ENCODE measurements at regions of chrX and their contacts with region 1.

Region 1: GRCh38 chrX:23732704-23733103 is 10.4 kb downstream of the ACOT9 start:
- DNase-seq: peak; percentile 8
- H3K4me3 Mint-ChIP-seq: peak overlapping the region; percentile 55
- H3K27ac Mint-ChIP-seq: peak overlapping the region; percentile 88
- H3K4me1 Mint-ChIP-seq: peaks cover 41% of the 10 kb centered on the region
- H3K27me3 Mint-ChIP-seq: no peaks in the 10 kb centered on the region

Region 2: GRCh38 chrX:23035493-23035892 is 697.2 kb before region 1 on chrX:
- CTCF ChIA-PET with region 1: no interaction called
- intact Hi-C with region 1: no loop called
- DNase-seq: no peak
- H3K4me3 Mint-ChIP-seq: no peak overlapping the region
- H3K27ac Mint-ChIP-seq: no peak overlapping the region
- H3K4me1 Mint-ChIP-seq: no peaks in the 10 kb centered on the region
- H3K27me3 Mint-ChIP-seq: no peaks in the 10 kb centered on the region

Region 3: GRCh38 chrX:23704673-23705206 is 28.0 kb before region 1 on chrX:
- CTCF ChIA-PET with region 1: interaction called, 3 read pairs
- intact Hi-C with region 1: loop called (anchors 1 kb)
- DNase-seq: no peak
- H3K4me3 Mint-ChIP-seq: no peak overlapping the region
- H3K27ac Mint-ChIP-seq: peak overlapping the region; percentile 56
- H3K4me1 Mint-ChIP-seq: peaks cover 5% of the 10 kb centered on the region
- H3K27me3 Mint-ChIP-seq: no peaks in the 10 kb centered on the region

Region 4: GRCh38 chrX:23756157-23756559 is 23.5 kb after region 1 on chrX:
- CTCF ChIA-PET with region 1: no interaction called
- intact Hi-C with region 1: loop called (anchors 1 kb)
- DNase-seq: peak; percentile 75
- H3K4me3 Mint-ChIP-seq: peak overlapping the region; percentile 24
- H3K27ac Mint-ChIP-seq: peak overlapping the region; percentile 66
- H3K4me1 Mint-ChIP-seq: peaks cover 8% of the 10 kb centered on the region
- H3K27me3 Mint-ChIP-seq: no peaks in the 10 kb centered on the region

Region 5: GRCh38 chrX:23861215-23861896 is 128.7 kb after region 1 on chrX:
- CTCF ChIA-PET with region 1: no interaction called
- intact Hi-C with region 1: no loop called
- DNase-seq: no peak
- H3K4me3 Mint-ChIP-seq: no peak overlapping the region
- H3K27ac Mint-ChIP-seq: no peak overlapping the region
- H3K4me1 Mint-ChIP-seq: peaks cover 5% of the 10 kb centered on the region
- H3K27me3 Mint-ChIP-seq: no peaks in the 10 kb centered on the region

Region 6: GRCh38 chrX:23901805-23902204 is 169.1 kb after region 1 on chrX:
- CTCF ChIA-PET with region 1: interaction called, 10 read pairs
- intact Hi-C with region 1: loop called (anchors 2 kb)
- DNase-seq: peak; percentile 61
- H3K4me3 Mint-ChIP-seq: no peak overlapping the region
- H3K27ac Mint-ChIP-seq: no peak overlapping the region
- H3K4me1 Mint-ChIP-seq: peaks cover 11% of the 10 kb centered on the region
- H3K27me3 Mint-ChIP-seq: no peaks in the 10 kb centered on the region

Region 7: DNA sequence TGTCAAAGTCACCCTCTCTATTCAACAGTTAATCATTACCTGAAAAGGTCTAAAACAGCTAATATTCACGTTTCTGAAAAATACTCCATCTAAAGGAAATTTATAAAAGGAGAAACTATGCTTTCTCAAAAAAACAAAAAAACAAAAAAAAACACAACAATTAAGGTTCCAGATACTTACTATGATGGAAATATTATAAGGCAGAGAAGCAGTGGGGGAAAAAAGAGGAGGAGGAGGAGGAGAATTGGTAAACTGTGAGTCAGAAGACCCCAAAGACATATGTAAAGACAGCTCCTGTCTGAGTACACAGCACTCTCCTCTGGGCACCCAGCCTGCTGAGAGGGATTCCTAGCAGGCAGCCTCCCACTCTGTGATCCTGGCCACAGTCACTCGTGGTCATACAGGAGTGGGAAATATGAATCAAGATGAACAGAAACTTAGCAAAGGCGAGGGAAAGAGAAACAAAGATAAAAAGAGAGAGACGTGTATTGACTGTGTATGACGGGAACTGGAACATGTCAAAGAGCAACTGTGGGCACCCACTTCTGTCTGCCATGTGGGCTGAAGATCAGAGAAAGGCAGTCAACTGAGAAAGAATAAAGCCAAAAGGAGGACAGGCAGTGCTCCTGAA is 281.8 kb after region 1 on chrX:
- CTCF ChIA-PET with region 1: no interaction called
- intact Hi-C with region 1: loop called (anchors 2 kb)
- DNase-seq: peak; percentile 76
- H3K4me3 Mint-ChIP-seq: peak overlapping the region; percentile 67
- H3K27ac Mint-ChIP-seq: peak overlapping the region; percentile 92
- H3K4me1 Mint-ChIP-seq: peaks cover 37% of the 10 kb centered on the region
- H3K27me3 Mint-ChIP-seq: no peaks in the 10 kb centered on the region

Region 8: GRCh38 chrX:24150051-24150790 is 417.5 kb after region 1 on chrX:
- CTCF ChIA-PET with region 1: no interaction called
- intact Hi-C with region 1: loop called (anchors 5 kb)
- DNase-seq: peak; percentile 89
- H3K4me3 Mint-ChIP-seq: peak overlapping the region; percentile 80
- H3K27ac Mint-ChIP-seq: peak overlapping the region; percentile 89
- H3K4me1 Mint-ChIP-seq: peaks cover 56% of the 10 kb centered on the region
- H3K27me3 Mint-ChIP-seq: no peaks in the 10 kb centered on the region

Region 9: DNA sequence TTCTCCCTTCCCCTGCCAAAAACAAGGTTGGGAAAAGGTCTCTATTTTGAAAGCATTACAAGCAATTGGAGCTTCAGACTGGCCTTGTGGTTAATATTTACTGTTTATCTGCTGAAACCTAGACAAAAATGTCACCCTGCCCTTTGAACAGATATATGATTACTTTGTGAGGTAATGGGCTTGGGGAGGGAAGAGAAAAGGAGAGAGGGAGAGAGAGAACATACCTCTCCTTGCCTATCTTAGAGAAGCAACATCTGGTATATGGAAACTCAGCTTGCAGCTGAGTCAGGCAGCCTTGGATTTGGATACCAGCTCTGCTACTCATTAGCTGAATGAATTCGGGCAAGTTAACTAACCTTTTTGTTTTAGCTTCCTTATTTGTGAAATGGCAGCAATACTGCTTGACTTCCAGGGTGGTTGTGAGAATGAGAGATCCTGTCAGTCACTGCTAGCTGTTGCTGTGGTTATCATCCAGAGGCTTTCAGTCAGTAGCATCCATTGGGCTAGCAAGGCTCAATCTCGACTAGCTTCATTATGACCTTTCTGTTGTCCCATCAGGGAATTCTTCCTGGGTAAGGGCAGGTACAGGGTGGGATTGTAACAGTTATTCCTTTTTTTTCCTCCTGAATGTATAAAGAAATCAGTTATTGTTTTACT is 457.9 kb after region 1 on chrX:
- CTCF ChIA-PET with region 1: no interaction called
- intact Hi-C with region 1: no loop called
- DNase-seq: no peak
- H3K4me3 Mint-ChIP-seq: no peak overlapping the region
- H3K27ac Mint-ChIP-seq: peak overlapping the region; percentile 61
- H3K4me1 Mint-ChIP-seq: peaks cover 46% of the 10 kb centered on the region
- H3K27me3 Mint-ChIP-seq: no peaks in the 10 kb centered on the region

Region 10: DNA sequence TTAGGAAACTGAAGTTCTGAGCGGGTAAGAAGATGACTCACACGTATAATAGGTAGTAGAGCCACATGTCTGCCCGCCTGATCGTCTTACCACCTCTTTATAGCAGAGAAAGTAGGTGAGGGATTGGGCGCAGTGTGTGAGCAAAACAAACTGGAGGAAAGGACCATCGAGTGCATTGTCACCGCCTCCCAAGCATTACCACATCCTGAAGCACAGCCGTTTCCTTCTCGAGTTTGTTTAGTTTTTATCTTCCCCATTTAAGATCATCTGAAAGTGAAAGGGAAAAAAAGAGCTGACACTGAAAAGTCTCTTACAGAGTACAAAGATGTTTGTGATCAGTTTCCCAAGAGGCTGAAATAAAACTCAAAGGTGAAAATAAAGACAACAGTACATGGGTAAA is 747.2 kb after region 1 on chrX:
- CTCF ChIA-PET with region 1: no interaction called
- intact Hi-C with region 1: loop called (anchors 1 kb)
- DNase-seq: peak; percentile 86
- H3K4me3 Mint-ChIP-seq: peak overlapping the region; percentile 69
- H3K27ac Mint-ChIP-seq: peak overlapping the region; percentile 96
- H3K4me1 Mint-ChIP-seq: peaks cover 69% of the 10 kb centered on the region
- H3K27me3 Mint-ChIP-seq: no peaks in the 10 kb centered on the region